GM23248 (cell line): ENCODE measurements at regions of chr7 and their contacts with region 1.

Region 1: GRCh38 chr7:75762314-75762917 is 9.6 kb downstream of the CCL26 start:
- DNase-seq: peak; percentile 88
- H3K4me3 ChIP-seq: no peak overlapping the region
- H3K27ac ChIP-seq: no peak overlapping the region
- H3K4me1 ChIP-seq: no peaks in the 10 kb centered on the region
- H3K27me3 ChIP-seq: no peaks in the 10 kb centered on the region

Region 2: GRCh38 chr7:75565132-75565837 is 197.1 kb before region 1 on chr7:
- in situ Hi-C with region 1: loop called (anchors 25 kb)
- DNase-seq: peak; percentile 91
- H3K4me3 ChIP-seq: no peak overlapping the region
- H3K27ac ChIP-seq: no peak overlapping the region
- H3K4me1 ChIP-seq: peaks cover 10% of the 10 kb centered on the region; the same call in 1 of the 2 replicates
- H3K27me3 ChIP-seq: no peaks in the 10 kb centered on the region

Region 3: GRCh38 chr7:75962607-75963380 is 200.4 kb after region 1 on chr7:
- in situ Hi-C with region 1: no loop called
- DNase-seq: peak; percentile 94
- H3K4me3 ChIP-seq: 0 out of 2 replicates have a peak overlapping the region, but pooled peaks have one; percentile 7
- H3K27ac ChIP-seq: peak overlapping the region; percentile 94
- H3K4me1 ChIP-seq: peaks cover 24% of the 10 kb centered on the region
- H3K27me3 ChIP-seq: no peaks in the 10 kb centered on the region